Caco-2 (cell line): ENCODE measurements at regions of chr6 and their contacts with region 1.

Region 1: GRCh38 chr6:30717042-30717844 is at the start of gene MDC1:
- DNase-seq: peak; percentile 99 to 100
- H3K4me3 ChIP-seq: peak within 1 kb of the TSS; percentile 56
- H3K4me3 Mint-ChIP-seq: peak within 1 kb of the TSS; percentile 95
- H3K27ac Mint-ChIP-seq: peak within 1 kb of the TSS; percentile 100
- H3K4me1 ChIP-seq: peaks cover 10% of the 10 kb centered on the region; the same call in 1 of the 2 replicates
- H3K4me1 Mint-ChIP-seq: peaks cover 14% of the 10 kb centered on the region
- H3K27me3 ChIP-seq: no peaks in the 10 kb centered on the region
- H3K27me3 Mint-ChIP-seq: no peaks in the 10 kb centered on the region
- CTCF ChIP-seq: peak; percentile 17 to 31
- total RNA-seq, gene MDC1: 46.6 and 48.6 TPM in 2 replicates

Region 2: GRCh38 chr6:30544666-30545272 is 172.5 kb before region 1 on chr6:
- CTCF ChIA-PET with region 1: no interaction called
- POLR2A ChIA-PET with region 1: no interaction called
- intact Hi-C with region 1: no loop called
- DNase-seq: peak in 1 of 2 experiments; percentile 43
- H3K4me3 ChIP-seq: no peak overlapping the region
- H3K4me3 Mint-ChIP-seq: no peak overlapping the region
- H3K27ac Mint-ChIP-seq: no peak overlapping the region
- H3K4me1 ChIP-seq: no peaks in the 10 kb centered on the region
- H3K4me1 Mint-ChIP-seq: peaks cover 16% of the 10 kb centered on the region
- H3K27me3 ChIP-seq: no peaks in the 10 kb centered on the region
- H3K27me3 Mint-ChIP-seq: no peaks in the 10 kb centered on the region
- CTCF ChIP-seq: peak; percentile 48 to 68

Region 3: DNA sequence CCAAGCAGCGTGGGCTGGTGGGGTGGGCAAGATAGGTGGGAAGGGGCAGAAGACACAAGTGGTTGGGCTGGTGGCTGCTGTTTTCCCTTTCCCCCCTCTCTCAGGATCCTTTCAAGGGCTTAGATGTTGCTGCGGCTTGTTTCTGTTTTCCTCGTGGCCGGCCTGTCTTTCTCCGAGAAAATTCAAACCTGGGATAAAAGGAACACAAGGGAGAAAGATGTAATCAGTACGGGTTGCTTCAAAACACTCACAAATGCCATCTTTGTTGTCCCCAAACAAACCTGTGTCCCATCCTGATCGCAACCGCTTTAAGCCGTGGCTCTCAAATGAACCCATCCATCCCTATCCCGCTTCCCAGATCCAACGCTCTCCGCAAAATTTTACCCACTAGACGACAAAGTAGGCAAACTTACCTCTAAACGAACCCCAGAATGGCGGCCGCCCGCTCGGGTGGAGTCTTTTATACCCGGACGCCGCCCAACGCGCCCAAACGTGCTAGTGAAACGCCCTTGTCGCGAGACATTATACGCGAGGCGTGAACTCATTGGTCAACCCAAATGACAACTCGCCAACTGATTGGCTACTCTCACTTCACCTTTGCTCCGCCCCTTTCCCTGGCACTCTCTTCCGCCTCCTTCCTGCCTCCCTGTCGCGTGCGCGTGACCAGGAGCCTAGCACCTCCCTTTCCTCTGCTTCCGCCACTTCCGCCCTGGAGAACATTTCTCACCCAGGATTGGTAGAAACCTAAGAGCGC is 100.3 kb before region 1 on chr6 and contains the start of gene PPP1R10:
- CTCF ChIA-PET with region 1: no interaction called
- POLR2A ChIA-PET with region 1: interaction called, 22 read pairs
- intact Hi-C with region 1: loop called (anchors 1 kb)
- DNase-seq: peak; percentile 99
- H3K4me3 ChIP-seq: peak within 1 kb of the TSS; percentile 77
- H3K4me3 Mint-ChIP-seq: peak within 1 kb of the TSS; percentile 78
- H3K27ac Mint-ChIP-seq: peak within 1 kb of the TSS; percentile 96
- H3K4me1 ChIP-seq: no peaks in the 10 kb centered on the region
- H3K4me1 Mint-ChIP-seq: peaks cover 22% of the 10 kb centered on the region
- H3K27me3 ChIP-seq: no peaks in the 10 kb centered on the region
- H3K27me3 Mint-ChIP-seq: peaks cover 6% of the 10 kb centered on the region
- CTCF ChIP-seq: no peak
- total RNA-seq, gene PPP1R10: 91.3 and 95.4 TPM in 2 replicates

Region 4: DNA sequence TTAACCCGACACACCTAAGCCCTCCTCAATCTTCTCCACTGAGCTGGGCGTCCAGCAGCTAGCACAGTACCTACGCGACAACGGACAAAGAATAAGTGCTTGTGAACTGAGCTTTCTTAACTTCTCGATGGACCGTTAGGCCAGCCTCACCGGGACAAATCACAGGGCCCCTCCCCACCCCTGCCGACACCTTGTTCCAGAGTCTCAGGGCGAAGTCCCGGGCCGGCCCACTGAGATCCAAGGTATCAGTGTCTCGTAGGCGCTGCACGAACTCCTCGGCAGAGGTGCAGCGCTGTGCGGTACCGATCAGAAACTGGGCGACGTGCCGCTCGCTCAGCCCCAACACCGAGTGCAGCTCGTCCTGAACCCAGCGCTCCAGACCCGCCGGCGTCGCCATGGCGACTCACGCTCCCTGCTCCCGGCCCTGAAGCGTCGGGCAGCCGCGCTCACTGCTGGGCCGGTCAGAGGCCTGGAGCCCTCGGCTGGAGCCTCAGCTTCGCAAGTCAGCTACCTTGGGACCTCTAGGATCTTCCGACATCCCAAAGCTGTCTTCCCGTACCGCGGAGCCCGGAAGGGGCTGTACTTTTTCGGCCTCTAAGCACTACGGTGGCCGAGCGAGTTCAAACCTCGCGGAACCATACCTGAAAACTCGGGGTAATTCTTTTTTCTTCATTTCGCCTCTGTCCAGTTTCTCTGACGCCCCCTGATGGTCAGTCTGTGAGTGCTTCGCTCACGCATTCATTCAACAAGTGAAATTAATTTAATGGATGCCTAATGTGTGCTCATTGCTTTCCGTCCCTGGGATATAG is 44.6 kb before region 1 on chr6 and contains the start of gene DHX16:
- CTCF ChIA-PET with region 1: interaction called, 6 read pairs
- POLR2A ChIA-PET with region 1: interaction called, 5 read pairs
- intact Hi-C with region 1: loop called (anchors 1 kb)
- DNase-seq: peak; percentile 96
- H3K4me3 ChIP-seq: peak within 1 kb of the TSS; percentile 85
- H3K4me3 Mint-ChIP-seq: peak within 1 kb of the TSS; percentile 77
- H3K27ac Mint-ChIP-seq: peak within 1 kb of the TSS; percentile 71
- H3K4me1 ChIP-seq: peaks cover 6% of the 10 kb centered on the region
- H3K4me1 Mint-ChIP-seq: peaks cover 5% of the 10 kb centered on the region
- H3K27me3 ChIP-seq: no peaks in the 10 kb centered on the region
- H3K27me3 Mint-ChIP-seq: no peaks in the 10 kb centered on the region
- CTCF ChIP-seq: peak; percentile 80 to 85
- total RNA-seq, gene DHX16: 36.6 and 40.6 TPM in 2 replicates

Region 5: DNA sequence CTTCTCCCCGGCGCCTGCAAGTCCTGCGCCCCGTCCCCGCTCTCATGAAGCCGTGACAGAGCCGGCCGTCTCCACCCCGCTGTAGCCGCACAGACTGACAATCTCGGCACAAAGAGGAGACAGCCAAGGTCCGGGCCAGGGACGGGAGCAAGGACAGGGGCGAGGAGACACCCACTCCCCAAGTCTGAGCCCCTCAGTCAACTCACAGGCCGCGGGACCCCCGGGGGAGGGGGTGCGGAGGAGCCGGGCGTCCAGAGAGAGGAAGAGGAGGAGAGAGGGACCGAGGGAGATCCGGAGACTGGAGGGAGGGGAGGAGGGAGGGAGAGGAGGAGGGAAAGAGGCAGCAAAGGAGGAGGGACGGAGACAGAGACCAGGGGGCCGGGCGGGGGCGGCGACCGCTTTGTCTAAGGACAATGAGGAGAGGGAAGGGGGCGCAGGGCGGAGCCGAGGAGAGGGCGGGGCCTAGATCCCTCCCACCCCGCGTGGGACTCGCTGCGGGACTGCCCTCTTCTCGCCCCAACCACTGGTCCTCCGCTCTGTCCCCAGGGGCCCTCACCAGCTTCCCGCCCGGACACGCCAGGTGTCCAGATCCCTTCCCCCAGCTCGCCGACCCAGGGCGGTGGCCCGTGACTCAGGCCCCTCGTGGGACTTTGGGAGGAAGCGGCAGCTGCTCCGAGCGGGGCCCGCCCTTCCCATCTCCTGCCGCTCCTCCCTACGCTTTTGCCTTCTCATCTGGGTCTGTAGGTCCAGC is 30.2 kb before region 1 on chr6:
- CTCF ChIA-PET with region 1: interaction called, 6 read pairs
- POLR2A ChIA-PET with region 1: interaction called, 12 read pairs
- intact Hi-C with region 1: loop called (anchors 1 kb)
- DNase-seq: peak; percentile 79 to 86
- H3K4me3 ChIP-seq: peak overlapping the region; percentile 78
- H3K4me3 Mint-ChIP-seq: peak overlapping the region; percentile 82
- H3K27ac Mint-ChIP-seq: peak overlapping the region; percentile 68
- H3K4me1 ChIP-seq: peaks cover 24% of the 10 kb centered on the region
- H3K4me1 Mint-ChIP-seq: peaks cover 44% of the 10 kb centered on the region
- H3K27me3 ChIP-seq: no peaks in the 10 kb centered on the region
- H3K27me3 Mint-ChIP-seq: no peaks in the 10 kb centered on the region
- CTCF ChIP-seq: no peak

Region 6: DNA sequence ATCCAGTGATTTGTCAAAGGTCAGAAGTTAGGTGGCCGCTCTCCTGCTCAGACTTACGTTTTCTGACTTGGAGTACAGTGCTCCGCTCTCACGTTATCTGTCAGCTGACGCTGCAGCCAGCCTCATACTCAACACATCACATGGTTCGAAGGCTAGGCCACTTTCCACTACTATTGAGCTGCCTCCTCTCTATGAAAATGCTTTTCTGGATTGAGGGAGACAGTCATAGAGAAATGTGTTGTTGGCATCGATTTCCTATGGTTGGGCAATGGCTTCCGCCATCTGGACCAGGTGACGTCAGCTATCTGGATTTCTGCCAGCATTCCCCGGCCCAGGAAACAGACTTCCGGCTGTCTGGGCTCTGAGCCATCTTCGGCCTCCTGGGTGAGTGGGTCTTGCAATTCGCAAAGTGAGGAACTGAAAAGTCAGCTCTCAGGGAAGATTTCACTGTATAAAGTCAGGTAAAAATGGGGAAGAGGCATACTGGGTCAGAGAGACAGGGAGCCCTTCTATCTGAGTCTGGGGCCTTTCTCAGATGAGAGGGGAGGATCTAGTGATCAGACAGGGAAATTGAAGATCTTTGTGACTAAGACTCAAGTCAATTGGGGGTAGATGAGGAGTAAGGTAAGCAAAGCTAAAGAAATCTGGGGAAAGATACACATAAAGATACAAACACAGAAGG is 64.6 kb after region 1 on chr6:
- CTCF ChIA-PET with region 1: no interaction called
- POLR2A ChIA-PET with region 1: no interaction called
- intact Hi-C with region 1: no loop called
- DNase-seq: no peak
- H3K4me3 ChIP-seq: no peak overlapping the region
- H3K4me3 Mint-ChIP-seq: no peak overlapping the region
- H3K27ac Mint-ChIP-seq: no peak overlapping the region
- H3K4me1 ChIP-seq: peaks cover 11% of the 10 kb centered on the region
- H3K4me1 Mint-ChIP-seq: peaks cover 17% of the 10 kb centered on the region
- H3K27me3 ChIP-seq: no peaks in the 10 kb centered on the region
- H3K27me3 Mint-ChIP-seq: no peaks in the 10 kb centered on the region
- CTCF ChIP-seq: no peak